Aorta (tissue), 5 donors: ENCODE measurements at regions of chr13 and their contacts with region 1.

Region 1: GRCh38 chr13:46893798-46894560 is 2.9 kb downstream of the HTR2A start:
- DNase-seq: peak; percentile 79 to 93
- ATAC-seq: peak; percentile 95
- H3K4me3 ChIP-seq: peak overlapping the region; percentile 62 to 77
- H3K27ac ChIP-seq: peak overlapping the region; percentile 18 to 81
- H3K4me1 ChIP-seq: no peaks in the 10 kb centered on the region
- H3K27me3 ChIP-seq: no peaks in the 10 kb centered on the region

Region 2: DNA sequence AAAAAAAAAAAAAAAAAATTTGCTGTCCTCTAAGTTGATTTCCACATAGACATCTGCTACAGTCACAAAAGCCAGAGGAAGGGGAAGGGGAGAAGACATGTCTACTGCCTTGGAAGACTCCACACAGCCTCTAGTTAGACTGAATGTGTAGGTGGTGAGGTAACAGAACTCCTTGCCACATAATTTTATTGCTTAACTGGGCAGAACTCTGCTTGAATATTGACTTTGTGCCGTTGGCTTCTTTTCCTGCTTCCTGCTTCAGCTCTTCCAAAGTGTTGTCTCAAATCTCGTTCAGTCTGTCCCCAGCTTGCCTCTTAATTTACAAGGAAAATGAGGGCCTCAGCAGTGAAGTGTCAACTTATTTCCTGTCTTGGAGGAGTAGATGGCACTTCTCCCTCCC is 134.1 kb before region 1 on chr13:
- intact Hi-C with region 1: loop called in 1 of 2 experiments (anchors 10 kb)
- DNase-seq: no peak
- ATAC-seq: peak; percentile 48
- H3K4me3 ChIP-seq: no peak overlapping the region
- H3K27ac ChIP-seq: peak overlapping the region; percentile 62 to 82
- H3K4me1 ChIP-seq: peaks cover 2 to 6% of the 10 kb centered on the region in 2 donors
- H3K27me3 ChIP-seq: no peaks in the 10 kb centered on the region

Region 3: GRCh38 chr13:46778890-46779289 is 115.1 kb before region 1 on chr13:
- intact Hi-C with region 1: loop called in 1 of 2 experiments (anchors 10 kb)
- DNase-seq: no peak
- ATAC-seq: no peak
- H3K4me3 ChIP-seq: no peak overlapping the region
- H3K27ac ChIP-seq: no peak overlapping the region
- H3K4me1 ChIP-seq: peaks cover 2 to 7% of the 10 kb centered on the region in 2 donors
- H3K27me3 ChIP-seq: no peaks in the 10 kb centered on the region

Region 4: DNA sequence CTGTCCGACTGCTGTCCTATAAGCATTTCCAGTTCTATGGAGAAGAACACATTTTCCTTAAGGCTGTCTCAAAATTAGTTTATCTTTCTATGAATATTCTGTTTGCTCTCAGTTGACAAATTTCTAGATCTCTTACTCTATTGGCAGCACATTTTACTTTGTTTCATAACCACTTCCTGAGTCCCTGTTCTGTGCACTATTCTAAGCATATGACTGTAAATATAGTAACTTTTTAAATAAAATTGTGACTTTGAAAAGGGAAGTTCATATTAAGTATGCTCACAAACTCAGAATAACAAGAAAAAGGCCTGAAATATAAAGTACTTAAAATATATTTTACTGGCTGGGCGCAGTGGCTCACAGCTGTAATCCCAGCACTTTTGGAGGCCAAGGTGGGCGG is 59.4 kb after region 1 on chr13:
- intact Hi-C with region 1: loop called in 1 of 2 experiments (anchors 2 kb)
- DNase-seq: no peak
- ATAC-seq: no peak
- H3K4me3 ChIP-seq: no peak overlapping the region
- H3K27ac ChIP-seq: no peak overlapping the region
- H3K4me1 ChIP-seq: no peaks in the 10 kb centered on the region
- H3K27me3 ChIP-seq: no peaks in the 10 kb centered on the region

Region 5: DNA sequence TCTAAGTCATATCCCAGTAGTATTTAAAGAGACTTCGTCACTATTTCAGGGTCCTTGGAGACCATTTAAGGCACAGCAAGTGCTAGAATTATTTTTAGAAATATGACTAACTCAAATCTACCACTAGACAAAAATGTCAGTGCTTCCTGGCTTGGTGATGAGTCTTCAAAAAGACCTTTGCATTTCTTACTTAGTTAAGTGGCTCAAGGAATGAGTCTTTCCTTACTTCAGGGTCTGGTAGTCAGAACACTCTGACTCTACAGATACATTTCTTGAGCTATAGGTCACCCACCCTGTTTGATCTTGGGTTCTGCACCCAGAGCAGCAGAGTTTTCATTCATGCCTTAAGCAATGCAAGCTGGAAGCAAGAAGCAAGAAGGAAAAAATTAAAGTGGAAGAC is 193.9 kb after region 1 on chr13:
- intact Hi-C with region 1: loop called in 1 of 2 experiments (anchors 5 kb)
- DNase-seq: no peak
- ATAC-seq: no peak
- H3K4me3 ChIP-seq: no peak overlapping the region
- H3K27ac ChIP-seq: no peak overlapping the region
- H3K4me1 ChIP-seq: peaks cover 0 to 3% of the 10 kb centered on the region in 2 donors
- H3K27me3 ChIP-seq: no peaks in the 10 kb centered on the region

Region 6: DNA sequence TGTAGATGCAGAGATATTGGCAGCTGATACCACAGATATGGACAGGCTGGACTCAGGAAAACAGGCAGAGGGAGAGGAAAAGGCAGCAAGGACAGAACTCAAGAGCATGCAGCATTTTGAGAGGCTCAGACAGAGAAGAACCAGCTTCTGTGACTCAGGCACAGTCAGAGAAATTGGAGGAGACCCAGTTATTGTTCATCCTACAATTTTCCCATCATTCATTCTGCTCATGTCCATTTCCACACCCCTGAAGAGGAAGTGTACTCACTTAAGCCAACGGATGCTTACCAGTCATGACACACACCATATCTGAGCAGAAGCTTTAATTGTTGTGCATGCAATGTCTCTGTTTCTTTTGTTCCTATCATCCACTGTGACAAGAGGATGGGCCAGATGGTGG is 362.6 kb after region 1 on chr13:
- intact Hi-C with region 1: loop called in 1 of 2 experiments (anchors 10 kb)
- DNase-seq: no peak
- ATAC-seq: no peak
- H3K4me3 ChIP-seq: no peak overlapping the region
- H3K27ac ChIP-seq: no peak overlapping the region
- H3K4me1 ChIP-seq: peaks cover 3 to 5% of the 10 kb centered on the region in 2 donors
- H3K27me3 ChIP-seq: no peaks in the 10 kb centered on the region

Region 7: GRCh38 chr13:47334173-47334572 is 440.2 kb after region 1 on chr13:
- intact Hi-C with region 1: loop called in 1 of 2 experiments (anchors 10 kb)
- DNase-seq: no peak
- ATAC-seq: peak; percentile 39
- H3K4me3 ChIP-seq: no peak overlapping the region
- H3K27ac ChIP-seq: no peak overlapping the region
- H3K4me1 ChIP-seq: peaks cover 2% of the 10 kb centered on the region in 2 donors
- H3K27me3 ChIP-seq: no peaks in the 10 kb centered on the region